ENCODE measurements at regions of chr15 and their contacts with region 1.

Region 1: DNA sequence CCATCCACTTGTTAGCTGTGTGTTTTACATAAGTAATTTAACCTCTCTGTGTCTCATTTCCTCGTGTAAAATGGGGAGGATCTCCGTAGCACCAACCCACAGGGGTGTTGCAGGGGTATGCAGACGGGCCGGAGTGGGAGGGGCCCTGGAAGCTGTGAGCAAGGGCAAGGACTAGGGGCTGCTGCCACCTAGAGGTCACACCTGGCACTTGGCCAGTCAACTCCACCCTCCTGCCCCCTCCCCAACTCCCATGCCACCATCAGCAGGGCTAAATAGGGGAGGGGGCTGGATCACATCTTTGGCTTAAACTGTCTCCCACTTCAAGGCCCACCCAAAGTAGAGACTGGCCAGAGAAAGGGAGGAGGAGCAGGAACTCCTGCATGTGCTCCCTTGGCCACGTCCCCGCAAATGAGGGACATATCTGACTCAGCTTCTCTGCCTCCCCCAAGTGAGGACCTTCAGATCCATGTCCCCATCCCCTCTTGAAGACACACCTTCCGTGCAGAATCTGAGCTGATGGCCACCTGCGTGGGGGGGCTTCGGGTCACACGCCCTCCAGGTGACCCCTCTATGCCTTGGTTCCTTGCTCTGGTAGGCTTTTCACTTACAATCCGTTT is 2.6 kb downstream of the CCDC9B start:
- DNase-seq: peak; percentile 92
- ATAC-seq: peak; percentile 82
- H3K4me3 Mint-ChIP-seq: 0 out of 2 replicates have a peak overlapping the region, but pooled peaks have one; percentile 27
- H3K27ac Mint-ChIP-seq: no peak overlapping the region
- H3K4me1 Mint-ChIP-seq: peaks cover 42% of the 10 kb centered on the region
- H3K27me3 Mint-ChIP-seq: peaks cover 5% of the 10 kb centered on the region
- CTCF ChIP-seq: peak; percentile 87

Region 2: GRCh38 chr15:40252438-40253166 is 85.5 kb before region 1 on chr15:
- CTCF ChIA-PET with region 1: interaction called, 15 read pairs
- POLR2A ChIA-PET with region 1: no interaction called
- DNase-seq: peak; percentile 68
- ATAC-seq: peak; percentile 70
- H3K4me3 Mint-ChIP-seq: peak overlapping the region; percentile 73
- H3K27ac Mint-ChIP-seq: no peak overlapping the region
- H3K4me1 Mint-ChIP-seq: peaks cover 18% of the 10 kb centered on the region
- H3K27me3 Mint-ChIP-seq: peaks cover 38% of the 10 kb centered on the region
- CTCF ChIP-seq: no peak

Region 3: DNA sequence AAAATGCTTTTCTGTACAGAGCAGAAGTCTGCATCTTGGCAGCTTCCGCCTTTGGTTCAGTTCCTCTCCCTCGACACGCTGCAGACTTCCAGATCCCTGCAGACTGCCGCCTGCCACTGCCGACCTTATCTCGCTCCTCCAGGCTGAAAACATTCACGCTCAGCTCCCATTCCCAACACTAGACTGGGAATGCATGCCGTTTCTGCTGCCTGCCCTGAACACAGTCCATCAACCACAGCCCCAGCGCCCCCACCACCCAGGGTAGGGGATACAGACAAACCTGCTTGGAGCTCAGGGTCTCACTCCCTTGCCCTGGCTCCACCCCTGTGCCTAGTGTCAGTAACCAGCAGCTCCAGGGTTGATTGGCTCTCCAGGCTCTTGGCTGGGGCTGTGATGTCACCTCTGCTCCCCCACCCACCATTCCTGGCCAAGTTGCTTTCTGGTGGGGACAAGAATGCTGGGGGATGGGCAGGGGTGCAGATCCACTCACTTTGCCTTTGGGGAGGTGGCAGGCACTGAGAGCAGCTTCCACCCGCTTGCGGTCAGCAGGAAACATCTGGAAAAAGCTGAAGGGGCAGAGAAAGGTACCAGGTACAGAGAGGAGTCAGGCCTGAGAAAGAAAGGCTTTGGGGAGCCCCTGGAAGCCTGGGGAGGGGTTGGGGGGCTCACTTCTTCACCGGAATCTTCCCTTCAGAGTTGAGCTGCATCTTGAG is 36.5 kb before region 1 on chr15:
- CTCF ChIA-PET with region 1: interaction called, 76 read pairs
- POLR2A ChIA-PET with region 1: interaction called, 3 read pairs
- DNase-seq: peak; percentile 71
- ATAC-seq: peak; percentile 96
- H3K4me3 Mint-ChIP-seq: peak overlapping the region; percentile 22
- H3K27ac Mint-ChIP-seq: no peak overlapping the region
- H3K4me1 Mint-ChIP-seq: peaks cover 24% of the 10 kb centered on the region
- H3K27me3 Mint-ChIP-seq: no peaks in the 10 kb centered on the region; the same call in 1 of the 2 replicates
- CTCF ChIP-seq: no peak

Region 4: DNA sequence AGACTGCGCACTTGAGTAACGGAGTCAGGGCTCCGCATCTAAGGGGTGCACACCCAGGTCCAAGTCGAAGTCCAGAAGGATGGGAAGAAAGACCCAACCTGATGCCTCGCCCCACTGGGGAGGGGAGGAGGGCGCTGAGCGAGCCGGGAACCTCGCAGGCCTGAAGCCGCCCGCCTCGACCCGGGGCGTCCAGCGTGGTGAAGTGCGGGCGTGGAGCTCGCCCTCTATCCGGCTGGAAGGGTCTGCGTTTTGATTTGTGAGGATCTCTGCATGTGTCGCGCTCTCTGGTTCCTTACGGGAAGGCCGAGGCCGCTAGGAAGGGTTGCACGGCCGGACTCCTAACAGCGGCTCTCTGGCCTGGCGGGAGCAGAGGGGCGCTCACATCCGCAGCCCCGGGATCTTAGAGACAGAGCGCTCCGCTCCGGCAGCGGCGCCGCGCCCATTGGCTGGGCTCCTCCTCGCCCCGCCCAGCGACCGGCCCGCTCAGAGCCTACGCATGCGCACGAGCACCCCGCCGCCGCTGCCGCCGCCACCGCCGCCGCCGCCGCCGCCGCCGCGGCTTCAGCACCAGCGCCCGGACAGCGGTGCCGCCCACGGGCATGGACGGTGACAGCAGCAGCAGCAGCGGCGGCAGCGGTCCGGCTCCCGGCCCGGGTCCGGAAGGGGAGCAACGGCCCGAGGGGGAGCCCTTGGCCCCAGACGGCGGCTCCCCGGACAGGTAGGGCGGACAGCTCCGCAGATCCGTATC is 19.7 kb after region 1 on chr15 and contains the start of gene DISP2:
- CTCF ChIA-PET with region 1: interaction called, 63 read pairs
- POLR2A ChIA-PET with region 1: no interaction called
- DNase-seq: peak; percentile 91
- ATAC-seq: peak; percentile 88
- H3K4me3 Mint-ChIP-seq: peak within 1 kb of the TSS; percentile 78
- H3K27ac Mint-ChIP-seq: no peak within 1 kb of the TSS
- H3K4me1 Mint-ChIP-seq: peaks cover 29% of the 10 kb centered on the region
- H3K27me3 Mint-ChIP-seq: peaks cover 34% of the 10 kb centered on the region
- CTCF ChIP-seq: no peak
- total RNA-seq, gene DISP2: 1.0 to 3.5 TPM (median 1.9 TPM) in 3 replicates

Region 5: DNA sequence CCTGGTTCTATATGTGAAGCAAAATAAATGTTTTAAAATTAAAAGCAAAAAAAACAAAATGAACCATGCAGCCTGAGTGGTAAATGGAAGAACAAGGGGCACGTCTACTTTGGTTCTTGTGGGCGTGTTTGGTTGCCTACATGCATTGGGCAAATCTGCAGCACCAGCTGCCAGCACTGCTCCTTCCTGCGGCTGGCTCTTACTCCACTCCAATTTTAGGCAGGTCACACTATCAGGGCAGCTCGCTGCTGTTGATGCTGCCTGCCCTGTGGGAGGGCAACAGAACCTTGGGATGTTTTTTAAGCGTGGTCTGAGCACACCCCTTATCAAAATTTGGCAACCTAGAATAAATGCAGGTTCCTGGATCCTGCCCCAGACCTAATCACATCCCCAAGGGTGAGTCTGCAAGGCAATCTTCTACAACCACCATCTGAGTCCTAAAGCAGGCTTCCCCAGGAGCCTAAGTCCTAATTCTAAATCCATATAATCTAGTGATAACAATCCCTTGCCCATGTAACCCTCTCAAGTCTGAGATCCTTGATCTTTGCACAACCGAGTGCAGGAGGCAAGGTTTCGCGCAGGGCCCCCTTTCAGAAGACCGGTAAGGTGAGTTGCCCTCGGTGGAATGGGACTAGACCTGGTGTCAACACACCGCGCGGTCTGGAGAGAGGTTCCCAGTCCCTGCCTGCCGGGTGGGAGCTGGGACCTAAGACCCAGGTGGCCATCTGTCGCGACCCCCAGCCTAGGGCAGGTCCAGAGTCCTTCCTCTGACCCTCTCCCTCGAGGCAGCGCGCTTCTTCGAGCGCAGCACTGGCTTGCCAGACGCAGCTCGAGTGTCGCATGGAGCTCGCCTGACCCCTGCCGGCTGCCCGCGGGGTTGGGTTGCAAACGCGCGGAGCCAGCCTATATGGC is 83.4 kb after region 1 on chr15:
- CTCF ChIA-PET with region 1: interaction called, 98 read pairs
- POLR2A ChIA-PET with region 1: interaction called, 6 read pairs
- DNase-seq: peak; percentile 89
- ATAC-seq: peak; percentile 88
- H3K4me3 Mint-ChIP-seq: peak overlapping the region; percentile 45
- H3K27ac Mint-ChIP-seq: peak overlapping the region; percentile 22; the same call in 1 of the 2 replicates
- H3K4me1 Mint-ChIP-seq: peaks cover 14% of the 10 kb centered on the region
- H3K27me3 Mint-ChIP-seq: no peaks in the 10 kb centered on the region; the same call in 1 of the 2 replicates
- CTCF ChIP-seq: peak; percentile 70

Measured in WTC11 (cell line).